Common myeloid progenitor, CD34-positive (primary cell): ENCODE measurements at regions of chr15 and their contacts with region 1.

Region 1: DNA sequence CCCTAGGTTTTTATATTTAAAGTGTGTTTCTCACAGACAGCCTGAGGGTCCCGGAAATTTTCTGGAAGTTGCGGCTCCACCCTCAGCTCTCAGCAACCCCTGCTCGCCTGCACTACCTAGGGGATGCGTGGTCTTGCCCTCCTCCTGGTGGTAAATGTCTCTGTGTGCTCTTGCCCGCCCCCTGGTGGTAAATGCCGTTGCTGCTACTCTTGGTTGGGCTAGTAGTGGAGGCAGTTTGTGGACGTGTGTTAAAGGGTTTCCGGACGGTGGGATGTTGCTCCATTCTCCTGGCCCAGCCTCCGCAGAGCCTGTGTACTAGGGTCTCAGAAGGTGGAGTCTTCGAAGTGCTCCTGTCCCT is 27.4 kb downstream of the STOML1 start:
- DNase-seq: peak; percentile 85 to 91 (median 87)
- H3K4me3 ChIP-seq: peak overlapping the region in 3 of 7 experiments; percentile 32 to 52 (median 47)
- H3K27ac ChIP-seq: no peak overlapping the region
- H3K4me1 ChIP-seq: peaks cover 3 to 56% (median 41%) of the 10 kb centered on the region in 4 experiments
- H3K27me3 ChIP-seq: no peaks in the 10 kb centered on the region

Region 2: GRCh38 chr15:73873889-73874511 is 90.7 kb before region 1 on chr15:
- CTCF ChIA-PET with region 1: interaction called, 10 read pairs
- POLR2A ChIA-PET with region 1: no interaction called
- DNase-seq: peak; percentile 70 to 81 (median 74)
- H3K4me3 ChIP-seq: no peak overlapping the region
- H3K27ac ChIP-seq: no peak overlapping the region
- H3K4me1 ChIP-seq: peaks cover 0 to 13% (median 10%) of the 10 kb centered on the region in 4 experiments
- H3K27me3 ChIP-seq: peaks cover 0 to 10% (median 4%) of the 10 kb centered on the region in 5 experiments

Region 3: DNA sequence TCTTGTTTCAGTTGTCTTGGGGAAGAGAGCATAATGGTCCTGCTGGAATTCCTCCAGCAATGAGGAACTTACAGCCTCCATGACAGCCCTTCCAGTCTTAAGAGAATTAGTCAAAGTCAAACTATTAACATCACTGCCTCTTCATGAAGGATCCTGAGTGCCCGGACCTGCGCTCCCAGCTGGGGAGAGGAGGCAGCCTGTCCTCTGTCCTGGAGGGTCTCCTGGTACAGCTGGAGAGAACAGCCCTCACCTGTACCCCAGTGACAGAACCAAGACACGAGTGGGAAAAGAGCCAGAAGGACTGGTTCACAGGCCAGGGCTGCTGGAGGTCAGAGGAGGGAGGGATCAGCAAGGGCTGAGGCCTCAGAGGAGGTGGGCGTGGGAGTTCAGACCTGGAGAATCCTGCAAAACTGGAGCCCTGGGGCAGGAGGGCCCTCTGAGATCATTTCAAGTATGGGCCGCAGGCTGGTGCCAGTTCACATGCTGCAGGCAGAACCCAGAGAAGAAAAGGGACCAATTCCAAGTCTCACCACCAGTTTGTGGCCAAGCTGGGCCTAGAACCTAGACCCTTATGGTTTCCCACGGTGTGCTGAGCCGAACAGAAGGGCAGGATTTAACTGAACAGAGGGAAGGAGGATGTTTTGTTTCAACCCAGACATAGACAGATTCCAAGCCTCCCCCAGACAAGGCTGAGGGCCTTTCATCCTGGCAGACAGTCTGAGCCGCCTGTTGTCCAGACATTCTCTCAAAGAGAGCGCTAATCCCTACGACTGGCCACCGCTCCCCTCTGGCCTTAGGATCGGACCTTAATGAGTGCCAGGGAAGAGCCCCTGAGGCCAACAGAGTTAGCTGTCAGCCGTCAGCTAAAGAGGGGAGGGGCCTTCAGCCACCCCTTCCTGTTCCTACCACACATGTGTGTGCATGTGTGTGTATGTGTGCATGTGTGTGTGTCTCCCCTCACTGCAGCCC is 20.3 kb before region 1 on chr15:
- CTCF ChIA-PET with region 1: interaction called, 36 read pairs
- POLR2A ChIA-PET with region 1: no interaction called
- DNase-seq: peak; percentile 63 to 93 (median 86)
- H3K4me3 ChIP-seq: no peak overlapping the region
- H3K27ac ChIP-seq: no peak overlapping the region
- H3K4me1 ChIP-seq: peaks cover 0 to 30% (median 28%) of the 10 kb centered on the region in 4 experiments
- H3K27me3 ChIP-seq: no peaks in the 10 kb centered on the region

Region 4: DNA sequence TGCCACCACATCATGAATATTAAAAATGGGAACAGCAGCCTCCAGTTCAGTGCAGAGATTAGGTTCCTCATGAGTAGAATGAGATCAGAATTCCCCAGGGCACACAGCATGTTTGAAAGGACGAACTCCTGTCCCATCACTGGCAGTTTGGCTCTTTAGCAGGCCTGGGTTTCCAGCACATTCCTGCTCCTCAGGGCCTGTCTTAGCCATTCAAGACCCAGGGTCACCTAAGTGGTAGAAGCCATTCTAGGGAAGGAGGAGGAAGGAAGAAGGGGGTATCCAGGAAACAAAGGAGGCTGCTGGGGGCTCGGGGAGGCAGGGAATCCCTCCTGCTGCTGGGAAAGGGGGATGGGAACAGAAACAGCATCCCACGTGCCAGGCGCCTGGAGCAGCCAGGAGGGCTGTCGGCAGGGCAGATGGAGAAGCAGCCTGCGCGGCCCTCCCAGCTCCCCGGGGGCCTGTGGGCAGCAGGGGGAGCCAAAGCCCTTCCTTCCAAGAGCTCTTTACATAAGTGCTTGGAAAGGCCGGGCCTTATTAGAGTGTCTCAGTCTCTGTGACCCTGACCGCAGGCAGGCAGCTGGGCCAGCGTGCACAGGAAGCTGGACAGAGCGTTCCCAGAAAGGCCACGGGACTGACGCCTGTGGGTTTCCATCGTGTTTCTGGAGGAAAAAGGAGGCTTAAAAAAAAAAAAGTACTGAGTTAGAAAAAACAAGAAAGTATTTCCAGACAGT is 13.7 kb before region 1 on chr15:
- CTCF ChIA-PET with region 1: interaction called, 51 read pairs
- POLR2A ChIA-PET with region 1: interaction called, 6 read pairs
- DNase-seq: peak; percentile 85 to 94 (median 91)
- H3K4me3 ChIP-seq: no peak overlapping the region
- H3K27ac ChIP-seq: peak overlapping the region; percentile 25 to 30
- H3K4me1 ChIP-seq: peaks cover 1 to 64% (median 59%) of the 10 kb centered on the region in 4 experiments
- H3K27me3 ChIP-seq: no peaks in the 10 kb centered on the region

Region 5: DNA sequence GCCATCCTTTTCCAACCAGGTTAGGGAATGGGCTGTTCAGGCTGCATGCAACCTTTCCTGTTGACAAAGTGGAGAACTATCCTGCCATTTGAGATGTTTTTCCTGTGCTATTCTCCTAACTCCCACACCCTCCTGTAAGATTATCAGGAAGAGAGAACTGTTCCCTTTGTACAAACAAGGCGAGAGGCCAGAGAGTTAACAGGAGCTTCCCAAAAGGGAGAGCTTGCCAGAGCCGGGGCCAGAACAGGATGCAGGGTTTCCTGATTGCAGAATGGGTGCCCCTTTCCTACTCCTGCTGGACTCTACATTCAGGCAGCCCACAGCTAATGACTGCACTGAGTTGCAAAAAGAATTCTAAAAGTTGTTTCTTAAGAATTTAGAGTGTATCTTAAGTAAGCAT is 46.9 kb after region 1 on chr15:
- CTCF ChIA-PET with region 1: no interaction called
- POLR2A ChIA-PET with region 1: no interaction called
- DNase-seq: no peak
- H3K4me3 ChIP-seq: peak overlapping the region in 4 of 7 experiments; percentile 3 to 61 (median 46)
- H3K27ac ChIP-seq: peak overlapping the region; percentile 55
- H3K4me1 ChIP-seq: peaks cover 11 to 66% (median 40%) of the 10 kb centered on the region in 4 experiments
- H3K27me3 ChIP-seq: no peaks in the 10 kb centered on the region